ENCODE measurements at regions of chr2 and their contacts with region 1.

Region 1: DNA sequence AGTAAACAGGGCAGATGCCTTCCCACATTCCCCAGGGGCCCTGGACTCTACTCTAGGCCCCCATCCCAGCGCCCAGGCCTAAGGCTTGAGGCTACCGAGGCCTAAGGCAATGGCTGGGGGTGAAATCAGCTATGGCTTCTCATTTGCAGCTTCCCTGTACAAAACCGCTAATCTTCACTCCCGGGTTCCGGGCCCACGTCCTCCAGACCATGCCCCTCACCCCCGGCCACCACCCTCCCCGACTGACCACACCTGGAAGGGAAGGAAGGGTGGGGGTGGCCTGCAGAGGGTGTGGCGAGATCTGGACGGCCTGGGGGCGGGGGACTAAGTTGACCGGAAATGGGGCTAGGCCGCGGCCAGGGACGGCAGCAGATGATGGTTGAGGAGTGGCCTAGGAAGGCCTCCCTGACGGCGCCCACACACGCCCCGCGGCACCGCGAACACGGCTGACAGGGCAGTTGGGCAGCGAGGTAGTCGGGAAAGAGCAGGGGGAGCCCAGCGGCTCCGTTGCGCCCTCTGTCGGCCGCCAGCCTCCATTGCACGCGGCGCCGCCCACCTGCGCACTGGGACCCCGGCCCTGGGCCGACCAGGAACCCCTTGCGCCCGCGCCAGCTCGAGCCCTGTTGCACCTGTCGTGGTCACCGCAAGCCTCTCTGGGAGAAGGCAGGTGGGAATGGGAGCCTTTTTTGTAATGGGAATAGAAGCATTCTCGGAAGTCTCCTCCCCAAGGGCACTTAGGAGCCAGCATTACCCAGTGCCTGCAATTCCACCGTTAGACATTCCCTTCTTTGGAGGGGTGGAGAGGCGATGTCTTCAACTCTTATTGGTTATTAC is 117.1 kb upstream of the STPG4 start:
- DNase-seq: peak; percentile 27 to 73 (median 42)
- ATAC-seq: peak; percentile 92
- H3K4me3 ChIP-seq: peak overlapping the region; percentile 28 to 36
- H3K4me3 Mint-ChIP-seq: peak overlapping the region; percentile 63
- H3K27ac ChIP-seq: no peak overlapping the region
- H3K27ac Mint-ChIP-seq: no peak overlapping the region
- H3K4me1 ChIP-seq: no peaks in the 10 kb centered on the region
- H3K4me1 Mint-ChIP-seq: no peaks in the 10 kb centered on the region
- H3K27me3 ChIP-seq: no peaks in the 10 kb centered on the region
- H3K27me3 Mint-ChIP-seq: no peaks in the 10 kb centered on the region
- CTCF ChIP-seq: peak; percentile 98

Region 2: DNA sequence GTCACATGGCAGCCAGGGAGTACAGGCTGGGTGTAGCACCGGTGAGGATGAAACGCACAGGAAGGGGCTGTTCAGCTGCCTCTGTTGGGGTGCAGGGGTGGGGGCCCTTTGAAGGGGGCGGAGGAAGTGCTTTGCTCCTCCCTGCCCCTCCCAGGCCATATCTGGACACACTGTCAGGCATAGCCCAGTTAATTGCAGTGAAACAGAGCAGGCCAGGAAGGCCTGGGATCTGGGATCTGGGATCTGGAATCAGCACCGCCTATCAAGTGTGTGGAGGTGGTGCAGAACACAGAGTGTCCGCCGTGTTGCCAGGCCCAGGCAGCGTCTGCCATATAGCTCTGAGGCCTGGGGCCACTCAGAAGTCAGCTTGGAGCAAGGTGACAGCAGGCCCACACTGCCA is 11.4 kb after region 1 on chr2:
- CTCF ChIA-PET with region 1: interaction called, 24 read pairs
- POLR2A ChIA-PET with region 1: interaction called, 3 read pairs
- intact Hi-C with region 1: no loop called
- DNase-seq: no peak
- ATAC-seq: no peak
- H3K4me3 ChIP-seq: no peak overlapping the region
- H3K4me3 Mint-ChIP-seq: no peak overlapping the region
- H3K27ac ChIP-seq: no peak overlapping the region
- H3K27ac Mint-ChIP-seq: no peak overlapping the region
- H3K4me1 ChIP-seq: no peaks in the 10 kb centered on the region
- H3K4me1 Mint-ChIP-seq: no peaks in the 10 kb centered on the region
- H3K27me3 ChIP-seq: no peaks in the 10 kb centered on the region
- H3K27me3 Mint-ChIP-seq: no peaks in the 10 kb centered on the region
- CTCF ChIP-seq: no peak

Measured in CD8-positive, alpha-beta T cell (primary cell).